Activated B cell treated with CpG ODN at 0.5 μM for 24 hours (primary cell): ENCODE measurements at regions of chr11 and their contacts with region 1.

Region 1: DNA sequence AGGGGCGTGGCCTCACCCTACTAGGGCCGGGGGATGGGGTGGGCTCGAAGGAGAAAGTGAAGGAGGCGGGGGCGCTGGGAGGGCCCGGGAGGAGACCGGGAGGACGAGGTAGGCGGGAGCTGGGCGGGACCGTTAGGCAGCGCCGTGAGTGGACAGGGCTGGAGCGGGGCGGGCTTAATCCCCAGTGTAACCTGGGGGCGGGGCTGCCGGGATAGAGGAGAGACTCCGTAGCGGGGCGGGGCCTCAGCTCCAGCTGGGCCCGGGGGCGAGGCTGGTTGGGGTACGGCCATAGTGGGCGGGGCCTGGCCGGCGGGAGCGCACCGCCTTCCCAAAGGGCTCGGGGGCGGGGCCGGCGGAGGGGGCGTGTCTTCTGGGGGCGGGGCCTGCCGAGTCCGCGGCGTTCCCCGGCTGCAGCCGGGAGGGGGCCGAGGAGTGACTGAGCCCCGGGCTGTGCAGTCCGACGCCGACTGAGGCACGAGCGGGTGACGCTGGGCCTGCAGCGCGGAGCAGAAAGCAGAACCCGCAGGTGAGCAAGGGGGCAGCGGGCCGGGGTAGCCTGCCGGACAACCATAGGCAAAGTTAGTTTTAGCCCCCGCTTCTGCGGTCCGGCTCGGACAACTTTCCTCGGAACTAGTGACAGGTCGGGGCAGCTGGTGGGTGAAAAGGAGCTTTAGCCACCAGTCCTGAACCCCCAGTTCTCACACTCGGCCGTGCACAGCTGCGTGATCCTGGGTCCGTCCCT is at the start of gene CD82:
- DNase-seq: peak; percentile 98
- ATAC-seq: peak; percentile 83
- H3K4me3 Mint-ChIP-seq: peak within 1 kb of the TSS; percentile 92
- H3K27ac Mint-ChIP-seq: peak within 1 kb of the TSS; percentile 80
- H3K4me1 Mint-ChIP-seq: peaks cover 72% of the 10 kb centered on the region
- H3K27me3 Mint-ChIP-seq: no peaks in the 10 kb centered on the region
- CTCF ChIP-seq: no peak
- total RNA-seq, gene CD82: 728 and 770 TPM in 2 replicates

Region 2: DNA sequence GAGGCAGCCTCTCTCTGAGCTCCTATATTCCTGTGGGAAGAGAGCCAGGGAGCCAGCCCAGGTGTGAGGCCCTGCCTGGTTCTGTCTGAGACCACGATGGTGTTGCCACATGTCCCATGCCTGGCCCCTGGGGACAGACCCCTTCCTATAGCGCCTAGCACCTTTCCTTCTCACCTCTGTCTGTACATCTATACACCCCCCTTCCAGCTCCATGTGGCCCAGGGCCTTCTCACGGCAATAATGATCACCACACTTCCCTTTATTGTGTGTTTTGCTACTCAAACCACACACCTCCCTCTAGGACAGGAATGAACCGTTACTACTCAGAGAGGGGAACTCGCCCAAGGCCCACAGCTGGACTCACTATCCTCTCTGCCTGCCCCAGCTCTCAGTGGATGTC is 12.9 kb after region 1 on chr11:
- CTCF ChIA-PET with region 1: no interaction called
- POLR2A ChIA-PET with region 1: interaction called, 15 read pairs
- intact Hi-C with region 1: no loop called
- DNase-seq: no peak
- ATAC-seq: peak; percentile 51
- H3K4me3 Mint-ChIP-seq: peak overlapping the region; percentile 55
- H3K27ac Mint-ChIP-seq: peak overlapping the region; percentile 69
- H3K4me1 Mint-ChIP-seq: peaks cover 93% of the 10 kb centered on the region
- H3K27me3 Mint-ChIP-seq: no peaks in the 10 kb centered on the region
- CTCF ChIP-seq: no peak

Region 3: DNA sequence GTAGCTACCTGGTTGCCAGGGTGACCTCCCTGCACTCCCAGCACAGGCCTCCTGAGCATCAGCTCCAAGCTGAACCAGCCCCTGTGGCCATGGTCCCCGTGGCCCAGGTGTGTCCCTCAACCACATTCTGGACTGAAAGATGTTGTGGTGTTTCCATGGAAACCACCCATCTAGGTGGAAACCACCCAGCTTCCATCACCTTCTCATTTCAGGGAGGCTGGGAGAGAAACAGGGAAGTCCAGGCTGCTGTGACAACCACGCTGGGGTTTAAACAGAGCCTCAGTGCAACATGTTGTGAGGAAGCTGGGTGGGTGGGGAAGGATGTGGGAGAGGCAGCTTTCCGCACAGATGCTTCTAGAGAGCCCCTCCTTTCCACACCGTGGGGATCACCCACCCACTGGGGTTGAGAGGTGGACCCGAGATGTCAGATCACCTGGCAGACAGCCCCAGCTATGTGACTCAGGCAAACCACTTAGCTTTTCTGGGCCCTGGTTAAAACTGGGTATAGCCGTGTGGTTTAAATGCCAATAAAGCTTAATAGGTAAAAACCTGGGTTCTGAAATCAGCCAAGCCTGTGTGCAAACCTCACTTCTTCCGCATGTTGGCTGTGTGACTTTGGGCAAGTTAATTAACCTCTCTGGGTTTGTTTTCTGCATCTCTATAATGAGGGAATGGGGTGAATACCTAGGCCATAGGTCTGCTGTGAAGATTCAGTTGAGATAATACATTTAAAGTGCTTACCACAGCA is 46.5 kb after region 1 on chr11:
- CTCF ChIA-PET with region 1: interaction called, 398 read pairs
- POLR2A ChIA-PET with region 1: interaction called, 308 read pairs
- intact Hi-C with region 1: loop called (anchors 1 kb)
- DNase-seq: peak; percentile 67
- ATAC-seq: peak; percentile 44
- H3K4me3 Mint-ChIP-seq: peak overlapping the region; percentile 26
- H3K27ac Mint-ChIP-seq: peak overlapping the region; percentile 97
- H3K4me1 Mint-ChIP-seq: peaks cover 100% of the 10 kb centered on the region
- H3K27me3 Mint-ChIP-seq: no peaks in the 10 kb centered on the region
- CTCF ChIP-seq: no peak

Region 4: DNA sequence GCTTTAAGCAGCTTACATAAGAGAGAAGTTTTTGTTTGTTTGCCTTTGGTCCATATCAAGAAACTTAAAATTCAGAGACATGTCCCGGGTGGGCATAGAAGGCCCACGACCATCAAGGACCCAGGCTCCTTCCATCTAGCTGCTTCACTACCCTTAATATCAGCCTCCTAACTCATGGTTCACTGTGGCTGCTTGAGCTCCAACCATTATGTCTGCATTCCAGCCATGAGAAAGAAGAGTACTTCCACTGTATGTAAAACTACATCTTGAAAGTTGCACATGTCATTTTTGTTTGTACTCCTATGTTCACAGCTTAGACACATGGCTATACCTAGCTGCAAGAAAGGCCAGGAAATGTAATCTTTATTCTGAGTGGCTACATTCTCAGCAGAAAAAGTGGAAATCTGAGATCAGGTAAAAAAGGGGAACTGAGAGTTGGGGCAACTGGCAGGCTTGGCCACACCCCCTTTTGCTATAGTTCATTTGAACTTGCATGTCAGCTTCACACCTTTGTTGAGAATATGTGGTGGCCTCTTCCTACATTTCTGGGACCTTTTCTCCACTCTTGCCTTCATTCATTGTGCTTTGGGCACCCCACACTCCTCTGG is 466.6 kb after region 1 on chr11:
- CTCF ChIA-PET with region 1: no interaction called
- POLR2A ChIA-PET with region 1: interaction called, 3 read pairs
- intact Hi-C with region 1: loop called (anchors 1 kb)
- DNase-seq: no peak
- ATAC-seq: peak; percentile 40
- H3K4me3 Mint-ChIP-seq: peak overlapping the region; percentile 55
- H3K27ac Mint-ChIP-seq: peak overlapping the region; percentile 81
- H3K4me1 Mint-ChIP-seq: peaks cover 64% of the 10 kb centered on the region
- H3K27me3 Mint-ChIP-seq: no peaks in the 10 kb centered on the region
- CTCF ChIP-seq: no peak

Region 5: GRCh38 chr11:45354976-45355705 is 789.8 kb after region 1 on chr11:
- CTCF ChIA-PET with region 1: no interaction called
- POLR2A ChIA-PET with region 1: no interaction called
- intact Hi-C with region 1: loop called (anchors 10 kb)
- DNase-seq: peak; percentile 77
- ATAC-seq: peak; percentile 95
- H3K4me3 Mint-ChIP-seq: peak overlapping the region; percentile 83
- H3K27ac Mint-ChIP-seq: peak overlapping the region; percentile 73
- H3K4me1 Mint-ChIP-seq: peaks cover 15% of the 10 kb centered on the region
- H3K27me3 Mint-ChIP-seq: peaks cover 5% of the 10 kb centered on the region
- CTCF ChIP-seq: no peak